ENCODE measurements at regions of chr2 and their contacts with region 1.

Region 1: GRCh38 chr2:74833418-74834233 is at the start of gene HK2:
- DNase-seq: peak; percentile 88
- H3K4me3 Mint-ChIP-seq: peak within 1 kb of the TSS; percentile 87
- H3K27ac Mint-ChIP-seq: peak within 1 kb of the TSS; percentile 82
- H3K4me1 Mint-ChIP-seq: peaks cover 40% of the 10 kb centered on the region
- H3K27me3 Mint-ChIP-seq: no peaks in the 10 kb centered on the region
- total RNA-seq, gene HK2: 53.5 to 53.7 TPM

Region 2: GRCh38 chr2:74587664-74588277 is 245.9 kb before region 1 on chr2:
- CTCF ChIA-PET with region 1: no interaction called
- POLR2A ChIA-PET with region 1: no interaction called
- intact Hi-C with region 1: loop called (anchors 10 kb)
- DNase-seq: peak; percentile 75
- H3K4me3 Mint-ChIP-seq: no peak overlapping the region
- H3K27ac Mint-ChIP-seq: no peak overlapping the region
- H3K4me1 Mint-ChIP-seq: peaks cover 27% of the 10 kb centered on the region
- H3K27me3 Mint-ChIP-seq: peaks cover under 1% of the 10 kb centered on the region

Region 3: DNA sequence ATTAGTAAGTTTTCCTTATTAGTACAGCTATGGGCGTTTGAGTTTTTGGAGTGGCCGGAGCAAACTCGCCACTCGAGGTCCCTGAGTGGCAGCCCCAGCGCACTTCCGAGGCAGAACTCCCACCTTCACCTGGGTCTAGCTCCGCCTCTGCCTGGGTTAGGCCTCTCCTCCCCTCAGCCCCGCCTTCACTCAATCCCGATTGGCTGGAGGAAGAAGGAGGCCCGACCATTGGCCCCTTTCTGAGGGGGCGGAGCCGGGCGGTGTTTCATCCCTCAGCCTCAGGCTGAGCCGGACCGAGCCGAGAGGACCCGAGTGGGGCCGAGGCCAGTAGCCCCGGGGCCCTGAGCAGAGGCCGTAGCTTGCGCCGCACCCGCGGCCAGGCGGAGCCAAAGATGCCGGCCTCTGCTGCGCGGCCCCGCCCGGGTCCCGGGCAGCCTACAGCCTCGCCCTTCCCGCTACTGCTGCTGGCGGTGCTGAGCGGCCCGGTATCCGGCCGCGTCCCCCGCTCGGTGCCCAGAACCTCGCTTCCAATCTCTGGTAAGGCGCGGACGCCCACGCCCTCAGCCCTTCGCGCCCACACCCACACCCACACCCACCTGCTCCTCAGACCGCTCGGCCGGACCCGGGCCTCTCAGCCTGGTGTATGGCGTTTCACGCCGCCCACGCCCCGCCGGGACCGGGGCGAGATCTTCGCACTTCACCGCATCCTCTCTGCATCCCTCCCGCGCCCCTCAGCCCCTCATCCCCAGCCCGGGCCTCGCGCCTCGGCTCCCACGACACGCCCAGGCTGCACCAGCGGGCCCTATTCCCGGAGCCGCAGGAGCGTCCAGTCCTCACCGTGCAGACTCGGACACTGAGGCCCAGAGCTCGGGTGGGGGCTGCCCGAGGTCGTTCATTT is 179.4 kb before region 1 on chr2 and contains the start of gene SEMA4F:
- CTCF ChIA-PET with region 1: no interaction called
- POLR2A ChIA-PET with region 1: interaction called, 4 read pairs
- intact Hi-C with region 1: loop called (anchors 2 kb)
- DNase-seq: peak; percentile 97
- H3K4me3 Mint-ChIP-seq: peak within 1 kb of the TSS; percentile 80
- H3K27ac Mint-ChIP-seq: peak within 1 kb of the TSS; percentile 31
- H3K4me1 Mint-ChIP-seq: peaks cover 13% of the 10 kb centered on the region
- H3K27me3 Mint-ChIP-seq: no peaks in the 10 kb centered on the region
- total RNA-seq, gene SEMA4F: 7.7 to 7.9 TPM

Region 4: GRCh38 chr2:74715078-74715791 is 118.4 kb before region 1 on chr2:
- CTCF ChIA-PET with region 1: interaction called, 22 read pairs
- POLR2A ChIA-PET with region 1: no interaction called
- intact Hi-C with region 1: loop called (anchors 2 kb)
- DNase-seq: peak; percentile 88
- H3K4me3 Mint-ChIP-seq: peak overlapping the region; percentile 81
- H3K27ac Mint-ChIP-seq: no peak overlapping the region
- H3K4me1 Mint-ChIP-seq: peaks cover 7% of the 10 kb centered on the region
- H3K27me3 Mint-ChIP-seq: peaks cover 4% of the 10 kb centered on the region

Region 5: GRCh38 chr2:74740389-74741075 is 93.1 kb before region 1 on chr2:
- CTCF ChIA-PET with region 1: no interaction called
- POLR2A ChIA-PET with region 1: no interaction called
- intact Hi-C with region 1: no loop called
- DNase-seq: peak; percentile 11
- H3K4me3 Mint-ChIP-seq: no peak overlapping the region
- H3K27ac Mint-ChIP-seq: no peak overlapping the region
- H3K4me1 Mint-ChIP-seq: peaks cover 1% of the 10 kb centered on the region
- H3K27me3 Mint-ChIP-seq: no peaks in the 10 kb centered on the region

Region 6: DNA sequence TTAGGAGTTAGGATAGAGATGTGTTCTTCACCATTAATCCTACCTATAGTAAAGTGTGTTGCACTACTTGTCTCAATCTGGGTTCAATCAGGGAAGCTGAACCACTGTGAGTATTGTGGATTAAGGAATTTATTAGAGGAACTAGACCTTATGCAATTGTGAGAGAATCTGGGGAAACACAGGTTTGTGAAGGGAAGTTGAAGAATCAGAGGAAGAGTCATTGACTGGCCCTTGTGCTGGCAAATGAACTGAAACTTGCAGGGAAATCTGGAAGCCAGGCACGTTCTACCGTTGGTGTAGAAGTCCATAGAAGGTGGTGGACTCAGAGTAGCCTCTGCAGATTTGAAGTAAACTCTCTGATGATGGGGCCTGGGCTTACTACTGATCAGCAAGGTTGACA is 44.4 kb before region 1 on chr2:
- CTCF ChIA-PET with region 1: no interaction called
- POLR2A ChIA-PET with region 1: no interaction called
- intact Hi-C with region 1: no loop called
- DNase-seq: no peak
- H3K4me3 Mint-ChIP-seq: no peak overlapping the region
- H3K27ac Mint-ChIP-seq: no peak overlapping the region
- H3K4me1 Mint-ChIP-seq: no peaks in the 10 kb centered on the region
- H3K27me3 Mint-ChIP-seq: no peaks in the 10 kb centered on the region

Region 7: DNA sequence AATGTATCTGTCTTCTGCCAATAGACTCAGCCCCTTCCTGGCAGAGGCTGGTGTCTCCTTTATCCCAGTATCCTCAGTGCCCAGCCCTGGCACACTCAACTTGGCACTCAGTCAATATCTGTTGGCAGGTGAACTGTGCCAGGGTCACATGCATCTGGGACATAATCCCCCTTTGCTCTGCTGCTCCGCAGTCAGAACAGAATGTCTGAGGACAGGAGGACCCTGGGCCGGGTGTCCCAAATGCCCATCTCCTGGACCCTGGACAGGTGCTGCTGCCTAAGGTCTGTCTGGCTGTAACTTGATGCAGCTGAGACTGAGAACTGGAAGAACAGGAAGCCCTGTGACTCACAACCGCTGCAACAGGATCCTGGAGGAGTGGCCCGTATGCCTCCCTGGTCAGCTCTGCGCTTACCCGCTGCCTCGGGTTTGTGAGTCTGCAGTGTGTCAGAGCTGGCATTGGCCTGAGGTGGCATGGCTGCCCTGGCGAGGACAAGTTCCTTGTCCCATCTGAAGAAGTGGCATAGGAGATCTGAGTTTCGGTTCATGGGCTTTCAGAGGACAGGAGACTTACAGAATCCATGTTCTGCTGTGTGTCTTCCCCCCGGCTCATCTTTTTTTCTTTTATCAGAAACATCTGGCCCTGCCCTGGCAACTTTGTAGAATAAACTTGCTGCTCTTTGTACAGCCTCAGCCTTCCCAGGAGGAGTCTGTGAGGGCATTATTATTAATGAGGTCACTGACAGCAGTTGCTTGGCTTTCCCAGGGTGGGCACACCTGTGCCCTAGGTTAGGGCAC is 11.8 kb after region 1 on chr2:
- CTCF ChIA-PET with region 1: interaction called, 35 read pairs
- POLR2A ChIA-PET with region 1: interaction called, 14 read pairs
- intact Hi-C with region 1: loop called (anchors 1 kb)
- DNase-seq: peak; percentile 65
- H3K4me3 Mint-ChIP-seq: no peak overlapping the region
- H3K27ac Mint-ChIP-seq: peak overlapping the region; percentile 36
- H3K4me1 Mint-ChIP-seq: peaks cover 93% of the 10 kb centered on the region
- H3K27me3 Mint-ChIP-seq: no peaks in the 10 kb centered on the region

Region 8: GRCh38 chr2:74876081-74876886 is 42.7 kb after region 1 on chr2:
- CTCF ChIA-PET with region 1: interaction called, 42 read pairs
- POLR2A ChIA-PET with region 1: no interaction called
- intact Hi-C with region 1: loop called (anchors 1 kb)
- DNase-seq: peak; percentile 59
- H3K4me3 Mint-ChIP-seq: no peak overlapping the region
- H3K27ac Mint-ChIP-seq: no peak overlapping the region
- H3K4me1 Mint-ChIP-seq: no peaks in the 10 kb centered on the region
- H3K27me3 Mint-ChIP-seq: no peaks in the 10 kb centered on the region

Region 9: GRCh38 chr2:74958274-74959105 is 124.9 kb after region 1 on chr2 and contains the start of gene POLE4:
- CTCF ChIA-PET with region 1: no interaction called
- POLR2A ChIA-PET with region 1: no interaction called
- intact Hi-C with region 1: loop called (anchors 2 kb)
- DNase-seq: peak; percentile 97
- H3K4me3 Mint-ChIP-seq: peak within 1 kb of the TSS; percentile 79
- H3K27ac Mint-ChIP-seq: peak within 1 kb of the TSS; percentile 87
- H3K4me1 Mint-ChIP-seq: peaks cover 64% of the 10 kb centered on the region
- H3K27me3 Mint-ChIP-seq: no peaks in the 10 kb centered on the region
- total RNA-seq, gene POLE4: 54.6 to 58.0 TPM

Measured in activated CD4-positive, alpha-beta memory T cell treated with anti-CD3 and anti-CD28 coated beads for 36 hours (primary cell).